ENCODE measurements at regions of chr12 and their contacts with region 1.

Region 1: DNA sequence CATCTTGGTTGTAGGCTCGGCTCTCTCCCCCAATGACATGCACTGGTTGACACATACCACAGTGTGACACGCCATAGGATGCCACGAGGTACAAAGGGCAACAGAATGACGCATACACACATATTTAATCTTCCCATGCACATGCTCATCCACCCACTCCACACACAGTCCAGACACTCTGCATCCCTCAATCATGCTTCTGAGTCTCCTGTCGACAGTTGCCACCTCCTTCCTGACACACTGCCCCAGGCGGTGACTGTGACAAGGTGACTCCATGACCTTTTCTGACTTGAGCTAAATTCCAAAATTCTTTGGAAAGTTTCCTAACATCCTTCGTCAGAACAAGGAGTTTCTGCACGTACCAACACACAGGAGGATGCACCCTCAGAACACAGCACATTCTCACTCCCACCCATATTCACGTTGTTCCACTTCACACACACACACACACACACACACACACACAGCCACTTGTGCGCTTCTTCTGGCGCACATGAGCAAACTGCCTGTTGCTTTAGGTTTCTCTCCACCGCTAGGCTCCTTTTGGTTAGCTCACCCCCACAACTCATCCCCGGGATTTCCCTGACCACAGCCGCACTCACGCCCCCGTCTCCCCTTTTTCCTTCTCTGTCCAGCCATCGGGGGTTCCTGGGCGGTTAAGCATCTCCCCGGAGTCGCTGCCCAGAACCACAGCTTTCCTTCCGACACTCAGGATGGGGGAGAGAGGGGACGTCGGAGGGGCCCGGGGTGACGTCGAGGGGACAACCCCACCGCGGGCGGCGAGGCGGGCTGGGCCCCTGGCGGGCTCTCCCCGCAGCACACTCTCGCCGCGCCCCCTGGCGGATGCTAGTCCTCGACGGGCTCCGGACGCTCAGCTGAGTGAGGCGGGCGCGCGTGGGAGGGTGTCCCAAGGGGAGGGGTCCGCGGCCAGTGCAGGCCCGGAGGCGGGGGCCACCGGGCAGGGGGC is 524 bp upstream of the WNT1 start:
- DNase-seq: peak; percentile 80
- ATAC-seq: peak; percentile 58
- H3K4me3 ChIP-seq: no peak overlapping the region
- H3K27ac ChIP-seq: no peak overlapping the region
- H3K4me1 ChIP-seq: peaks cover 9% of the 10 kb centered on the region
- H3K27me3 ChIP-seq: peaks cover 79% of the 10 kb centered on the region
- CTCF ChIP-seq: peak; percentile 74
- POLR2A ChIP-seq: no peak
- RAD21 ChIP-seq: peak; percentile 36

Region 2: GRCh38 chr12:47054659-47055058 is 1922.9 kb before region 1 on chr12:
- CTCF ChIA-PET with region 1: no interaction called
- POLR2A ChIA-PET with region 1: no interaction called
- dilution Hi-C with region 1: no loop called
- in situ Hi-C with region 1: no loop called
- intact Hi-C with region 1: no loop called
- DNase-seq: no peak
- ATAC-seq: no peak
- H3K4me3 ChIP-seq: no peak overlapping the region
- H3K27ac ChIP-seq: no peak overlapping the region
- H3K4me1 ChIP-seq: no peaks in the 10 kb centered on the region
- H3K27me3 ChIP-seq: no peaks in the 10 kb centered on the region
- CTCF ChIP-seq: no peak
- POLR2A ChIP-seq: no peak
- RAD21 ChIP-seq: no peak

Region 3: GRCh38 chr12:48988030-48988649 is 10.5 kb after region 1 on chr12:
- CTCF ChIA-PET with region 1: interaction called, 11 read pairs
- POLR2A ChIA-PET with region 1: no interaction called
- dilution Hi-C with region 1: no loop called
- in situ Hi-C with region 1: no loop called
- intact Hi-C with region 1: no loop called
- DNase-seq: peak; percentile 37
- ATAC-seq: peak; percentile 79
- H3K4me3 ChIP-seq: no peak overlapping the region
- H3K27ac ChIP-seq: no peak overlapping the region
- H3K4me1 ChIP-seq: no peaks in the 10 kb centered on the region
- H3K27me3 ChIP-seq: peaks cover 77% of the 10 kb centered on the region
- CTCF ChIP-seq: peak; percentile 70
- POLR2A ChIP-seq: no peak
- RAD21 ChIP-seq: peak; percentile 53

Region 4: DNA sequence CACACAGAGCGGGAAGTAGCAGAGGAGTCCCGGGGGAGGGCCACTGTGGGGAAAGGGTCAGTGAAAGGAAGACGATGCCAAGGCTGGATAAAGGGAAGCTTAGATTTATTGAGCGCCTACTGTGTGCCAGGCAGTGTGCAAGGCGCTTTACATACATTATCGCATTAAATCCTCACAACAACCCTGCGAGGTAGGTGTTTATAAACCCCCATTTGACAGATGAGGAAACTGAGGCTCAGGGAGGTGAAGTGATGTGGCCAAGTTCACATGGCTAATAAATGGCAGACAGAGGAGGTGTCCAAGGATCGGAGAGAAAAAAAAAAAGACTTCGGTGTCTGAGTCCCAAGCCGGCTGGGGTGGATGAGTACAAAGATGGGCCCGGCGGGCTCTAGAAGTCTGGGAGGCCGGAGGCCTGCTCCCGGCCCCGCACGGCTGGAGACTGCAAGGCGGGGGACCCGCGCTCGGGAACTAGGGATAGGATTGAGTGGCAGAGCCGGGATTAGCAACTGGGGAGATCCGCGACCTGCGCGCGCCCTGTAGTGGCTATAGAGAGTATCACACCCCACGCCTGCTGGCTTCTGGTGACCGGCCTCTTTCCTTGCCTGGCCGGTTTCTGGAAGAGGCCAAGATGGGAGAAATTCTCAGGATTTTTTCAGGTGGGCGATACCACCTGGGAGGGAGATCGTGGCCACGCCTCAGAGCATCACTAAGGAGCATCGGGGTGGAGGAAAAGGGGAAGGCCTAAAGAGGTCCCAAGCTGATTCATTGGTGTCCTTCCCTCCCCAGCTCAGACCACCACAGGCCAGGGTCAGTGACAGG is 17.7 kb after region 1 on chr12:
- CTCF ChIA-PET with region 1: interaction called, 12 read pairs
- POLR2A ChIA-PET with region 1: no interaction called
- dilution Hi-C with region 1: no loop called
- in situ Hi-C with region 1: no loop called
- intact Hi-C with region 1: no loop called
- DNase-seq: peak; percentile 73
- ATAC-seq: peak; percentile 77
- H3K4me3 ChIP-seq: no peak overlapping the region
- H3K27ac ChIP-seq: no peak overlapping the region
- H3K4me1 ChIP-seq: peaks cover 12% of the 10 kb centered on the region
- H3K27me3 ChIP-seq: peaks cover 44% of the 10 kb centered on the region
- CTCF ChIP-seq: peak; percentile 85
- POLR2A ChIP-seq: no peak
- RAD21 ChIP-seq: peak; percentile 84